ENCODE measurements at regions of chr7 and their contacts with region 1.

Region 1: DNA sequence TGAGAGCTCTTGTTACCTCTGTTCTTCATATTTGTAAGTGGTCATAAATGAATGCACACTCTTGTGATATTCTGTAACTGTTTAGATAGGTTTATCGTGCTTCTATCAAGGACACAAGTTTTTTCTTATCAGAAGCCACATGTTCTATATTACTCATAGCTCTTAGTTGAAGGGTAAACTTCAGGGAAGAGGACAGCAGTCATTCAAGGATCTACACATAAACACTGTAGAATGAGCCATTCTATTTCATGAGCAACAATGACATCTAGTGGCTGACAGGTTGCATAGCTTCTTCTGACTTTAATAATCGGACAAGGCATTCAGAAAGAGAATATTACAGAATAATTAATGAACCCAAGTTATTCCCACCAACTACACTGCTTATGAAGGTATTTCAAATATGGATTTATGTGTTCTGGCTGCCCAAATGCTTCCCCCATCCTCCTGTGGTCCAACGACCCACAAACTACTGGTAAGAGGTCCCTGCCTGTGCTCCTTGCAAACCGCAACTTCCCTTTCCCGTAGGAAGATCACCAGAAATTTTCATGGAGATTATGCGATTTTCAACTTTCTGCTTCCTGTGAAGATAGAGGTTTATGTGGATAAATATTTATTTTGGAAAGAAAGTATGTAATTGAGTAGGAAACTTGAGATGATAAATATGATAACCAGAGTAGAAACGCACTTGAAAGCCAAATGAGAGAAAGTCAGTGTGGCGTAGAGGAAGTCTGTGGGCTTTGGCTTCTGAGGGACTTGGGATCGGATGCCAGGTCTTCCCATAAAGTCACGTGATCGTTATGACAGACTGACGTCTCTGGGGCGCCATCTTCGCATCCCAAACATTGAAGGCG is 16.8 kb upstream of the ABCB5 start:
- DNase-seq: peak; percentile 70
- ATAC-seq: peak; percentile 63
- H3K4me3 ChIP-seq: no peak overlapping the region
- H3K4me3 Mint-ChIP-seq: no peak overlapping the region
- H3K27ac ChIP-seq: no peak overlapping the region
- H3K27ac Mint-ChIP-seq: no peak overlapping the region
- H3K4me1 ChIP-seq: peaks cover 3% of the 10 kb centered on the region in 2 donors
- H3K4me1 Mint-ChIP-seq: peaks cover 2% of the 10 kb centered on the region
- H3K27me3 ChIP-seq: peaks cover 0 to 11% (median 7%) of the 10 kb centered on the region in 4 experiments
- H3K27me3 Mint-ChIP-seq: peaks cover 19% of the 10 kb centered on the region
- CTCF ChIP-seq: peak; percentile 89

Region 2: GRCh38 chr7:19708397-19709248 is 890.1 kb before region 1 on chr7 and contains the start of gene POLR1F:
- CTCF ChIA-PET with region 1: interaction called, 341 read pairs
- POLR2A ChIA-PET with region 1: no interaction called
- intact Hi-C with region 1: loop called (anchors 1 kb)
- DNase-seq: peak; percentile 98
- ATAC-seq: peak; percentile 97
- H3K4me3 ChIP-seq: peak within 1 kb of the TSS; percentile 60 to 95 (median 85)
- H3K4me3 Mint-ChIP-seq: peak within 1 kb of the TSS; percentile 96
- H3K27ac ChIP-seq: peak within 1 kb of the TSS; percentile 87 to 88
- H3K27ac Mint-ChIP-seq: peak within 1 kb of the TSS; percentile 94
- H3K4me1 ChIP-seq: peaks cover 17 to 20% of the 10 kb centered on the region in 2 donors
- H3K4me1 Mint-ChIP-seq: peaks cover 41% of the 10 kb centered on the region
- H3K27me3 ChIP-seq: no peaks in the 10 kb centered on the region
- H3K27me3 Mint-ChIP-seq: peaks cover 3% of the 10 kb centered on the region
- CTCF ChIP-seq: peak; percentile 80
- total RNA-seq, gene POLR1F: 13.8 and 14.0 TPM in 2 replicates

Region 3: GRCh38 chr7:19747740-19748339 is 850.8 kb before region 1 on chr7:
- CTCF ChIA-PET with region 1: interaction called, 102 read pairs
- POLR2A ChIA-PET with region 1: no interaction called
- intact Hi-C with region 1: loop called (anchors 1 kb)
- DNase-seq: peak; percentile 43
- ATAC-seq: no peak
- H3K4me3 ChIP-seq: no peak overlapping the region
- H3K4me3 Mint-ChIP-seq: no peak overlapping the region
- H3K27ac ChIP-seq: no peak overlapping the region
- H3K27ac Mint-ChIP-seq: no peak overlapping the region
- H3K4me1 ChIP-seq: no peaks in the 10 kb centered on the region
- H3K4me1 Mint-ChIP-seq: no peaks in the 10 kb centered on the region
- H3K27me3 ChIP-seq: no peaks in the 10 kb centered on the region
- H3K27me3 Mint-ChIP-seq: peaks cover 4% of the 10 kb centered on the region
- CTCF ChIP-seq: peak; percentile 76

Region 4: DNA sequence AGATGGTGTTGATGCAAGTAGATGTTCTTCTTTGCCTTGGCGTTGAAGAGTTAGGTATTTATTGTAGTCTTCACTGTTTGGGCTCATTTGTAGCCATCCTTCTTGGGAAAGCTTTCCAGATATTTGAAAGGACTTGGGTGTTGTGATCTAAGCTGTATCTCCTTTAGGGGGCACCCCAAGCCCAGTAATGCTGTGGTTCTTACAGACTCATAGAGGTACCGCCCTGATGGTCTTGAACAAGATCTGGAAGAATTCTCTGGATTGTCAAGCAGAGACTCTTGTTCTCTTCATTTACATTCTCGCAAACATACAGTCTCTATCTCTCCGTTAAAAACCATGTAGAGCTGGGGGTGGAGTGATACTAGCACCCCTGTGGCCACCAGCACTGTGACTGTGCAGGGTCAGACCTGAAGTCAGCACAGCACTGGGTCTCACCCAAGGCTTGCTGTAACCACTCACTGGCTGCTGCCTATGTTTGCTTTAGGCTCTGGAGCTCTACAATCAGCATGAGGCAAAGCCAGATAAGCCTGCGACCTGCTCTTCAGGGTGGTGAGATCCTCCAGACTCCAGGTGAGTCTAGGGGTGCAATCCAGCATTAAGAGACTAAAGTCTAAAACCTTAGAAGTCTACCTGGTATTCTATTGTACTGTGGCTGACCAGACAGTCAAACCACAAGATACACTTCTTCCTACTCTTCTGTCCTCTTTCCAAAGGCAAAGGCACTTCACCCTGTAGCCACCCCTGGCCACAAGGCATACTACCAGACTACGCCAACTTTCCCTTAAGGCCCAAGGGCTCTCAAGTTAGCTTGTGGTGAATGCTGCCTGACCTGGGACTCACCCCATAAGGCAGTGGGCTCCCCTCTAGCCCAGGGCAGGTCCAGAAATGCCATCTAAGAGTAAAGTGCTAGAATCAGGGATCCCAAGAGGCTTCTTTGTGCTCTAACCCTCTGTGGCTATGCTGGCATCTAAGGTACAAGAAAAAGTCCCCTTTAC is 615.5 kb before region 1 on chr7:
- CTCF ChIA-PET with region 1: interaction called, 35 read pairs
- POLR2A ChIA-PET with region 1: no interaction called
- intact Hi-C with region 1: loop called (anchors 1 kb)
- DNase-seq: peak; percentile 55
- ATAC-seq: no peak
- H3K4me3 ChIP-seq: no peak overlapping the region
- H3K4me3 Mint-ChIP-seq: no peak overlapping the region
- H3K27ac ChIP-seq: no peak overlapping the region
- H3K27ac Mint-ChIP-seq: no peak overlapping the region
- H3K4me1 ChIP-seq: no peaks in the 10 kb centered on the region
- H3K4me1 Mint-ChIP-seq: no peaks in the 10 kb centered on the region
- H3K27me3 ChIP-seq: no peaks in the 10 kb centered on the region
- H3K27me3 Mint-ChIP-seq: no peaks in the 10 kb centered on the region
- CTCF ChIP-seq: peak; percentile 47

Measured in B cell (primary cell).